Psoas muscle (tissue), 8 donors: ENCODE measurements at regions of chr14 and their contacts with region 1.

Region 1: GRCh38 chr14:49633640-49634546 is 1.2 kb downstream of the DNAAF2 start:
- DNase-seq: peak; percentile 95 to 97
- ATAC-seq: peak; percentile 93 to 95 (median 94)
- H3K4me3 ChIP-seq: peak overlapping the region; percentile 97
- H3K27ac ChIP-seq: peak overlapping the region; percentile 100
- H3K4me1 ChIP-seq: peaks cover 20% of the 10 kb centered on the region
- H3K27me3 ChIP-seq: no peaks in the 10 kb centered on the region
- CTCF ChIP-seq: peak; percentile 68

Region 2: GRCh38 chr14:49692811-49693734 is 59.2 kb after region 1 on chr14 and contains the start of gene KLHDC1:
- intact Hi-C with region 1: loop called (anchors 2 to 10 kb)
- DNase-seq: peak; percentile 89 to 94
- ATAC-seq: peak; percentile 85 to 94 (median 91)
- H3K4me3 ChIP-seq: peak within 1 kb of the TSS; percentile 75
- H3K27ac ChIP-seq: peak within 1 kb of the TSS; percentile 93
- H3K4me1 ChIP-seq: peaks cover 5% of the 10 kb centered on the region
- H3K27me3 ChIP-seq: no peaks in the 10 kb centered on the region
- CTCF ChIP-seq: no peak
- total RNA-seq, gene KLHDC1: 5.3 to 7.6 (median 6.9) TPM

Region 3: DNA sequence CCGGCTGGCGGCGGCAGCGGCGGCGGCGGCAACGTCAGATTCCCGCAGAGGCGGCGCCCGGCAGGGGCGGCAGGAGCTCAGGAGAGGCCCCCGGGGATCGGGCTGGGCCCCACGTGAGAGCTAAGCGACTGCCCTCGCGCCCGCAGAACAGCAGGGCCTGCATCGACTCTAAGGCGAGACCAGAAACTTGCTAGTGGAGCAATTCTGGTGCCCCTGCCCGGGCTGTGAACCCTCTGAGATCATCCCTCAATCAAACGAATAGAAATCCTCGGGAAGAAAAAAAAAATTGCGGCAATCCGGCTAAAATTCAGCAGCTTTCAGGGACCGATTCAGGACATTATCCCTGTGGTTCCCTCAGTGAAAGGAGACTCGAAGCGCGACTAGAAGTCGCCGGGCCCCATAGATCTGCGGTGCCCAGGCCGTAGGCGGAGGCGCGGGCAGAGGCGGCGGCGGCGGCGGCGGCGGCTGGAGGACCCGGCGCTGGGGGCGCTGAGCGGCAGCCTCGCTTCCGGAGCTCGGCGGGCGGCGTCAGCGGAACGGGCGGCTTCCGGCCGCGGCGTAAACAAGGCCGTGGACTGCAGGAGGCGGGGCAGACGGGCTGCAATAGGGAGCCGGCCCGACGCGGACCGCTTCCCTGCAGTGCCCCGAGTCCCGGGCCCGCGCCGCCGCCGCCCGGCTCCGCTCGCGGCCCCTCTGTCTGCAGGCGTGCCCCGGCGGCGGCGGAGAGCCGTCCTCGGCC is 133.8 kb after region 1 on chr14 and contains the start of gene KLHDC2:
- intact Hi-C with region 1: loop called (anchors 2 to 5 kb)
- DNase-seq: peak; percentile 90 to 95
- ATAC-seq: peak; percentile 90 to 94 (median 94)
- H3K4me3 ChIP-seq: peak within 1 kb of the TSS; percentile 95
- H3K27ac ChIP-seq: peak within 1 kb of the TSS; percentile 94
- H3K4me1 ChIP-seq: peaks cover 24% of the 10 kb centered on the region
- H3K27me3 ChIP-seq: no peaks in the 10 kb centered on the region
- CTCF ChIP-seq: peak; percentile 42
- total RNA-seq, gene KLHDC2: 52.3 to 90.2 (median 69.5) TPM

Region 4: GRCh38 chr14:49828640-49829039 is 194.7 kb after region 1 on chr14:
- intact Hi-C with region 1: loop called in 1 of 2 experiments (anchors 1 kb)
- DNase-seq: no peak
- ATAC-seq: no peak
- H3K4me3 ChIP-seq: no peak overlapping the region
- H3K27ac ChIP-seq: no peak overlapping the region
- H3K4me1 ChIP-seq: no peaks in the 10 kb centered on the region
- H3K27me3 ChIP-seq: no peaks in the 10 kb centered on the region
- CTCF ChIP-seq: no peak

Region 5: DNA sequence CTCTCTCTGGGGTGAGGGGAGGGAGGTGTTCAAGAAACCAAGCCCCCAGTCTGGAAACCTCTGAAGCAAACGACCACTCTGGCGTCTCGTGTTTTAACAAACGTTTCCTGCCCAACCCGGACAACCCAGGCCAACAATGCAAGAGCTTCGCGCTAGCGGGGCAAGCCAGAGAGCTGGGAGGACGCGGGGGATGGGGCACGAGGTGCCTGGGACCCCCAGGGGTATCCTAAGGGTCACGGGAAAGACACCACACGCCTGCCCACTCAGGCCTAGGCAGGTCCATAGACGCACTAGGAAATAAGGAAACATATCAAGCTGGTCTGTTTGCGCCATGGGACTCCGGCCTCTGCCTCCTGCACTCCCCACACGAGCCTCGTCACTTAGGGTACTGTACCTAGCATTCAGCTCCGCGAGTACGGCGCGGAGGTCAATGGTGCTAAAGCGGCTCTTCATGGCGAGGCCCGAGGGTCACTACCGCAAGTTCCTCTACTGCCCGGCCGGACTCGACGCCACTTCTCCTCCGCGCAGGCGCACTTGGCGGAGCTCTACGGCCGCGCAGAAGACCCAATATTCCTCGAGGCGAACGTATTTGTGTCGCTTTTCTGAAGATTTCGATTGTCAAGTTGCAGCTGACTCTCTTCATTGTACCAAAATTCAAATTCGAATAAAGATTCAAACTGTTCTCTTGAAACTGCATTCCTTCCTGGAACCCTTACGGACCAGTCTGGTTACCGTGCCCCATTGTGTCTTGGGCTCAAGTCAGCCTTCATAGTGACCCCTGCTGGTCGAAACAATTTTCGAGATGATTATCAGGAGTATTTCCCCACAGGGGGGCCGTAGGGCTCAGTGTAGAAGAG is 218.6 kb after region 1 on chr14 and contains the start of gene NEMF:
- intact Hi-C with region 1: loop called (anchors 2 to 10 kb)
- DNase-seq: peak; percentile 87 to 94
- ATAC-seq: peak; percentile 86 to 90 (median 88)
- H3K4me3 ChIP-seq: peak within 1 kb of the TSS; percentile 84
- H3K27ac ChIP-seq: peak within 1 kb of the TSS; percentile 95
- H3K4me1 ChIP-seq: peaks cover 23% of the 10 kb centered on the region
- H3K27me3 ChIP-seq: no peaks in the 10 kb centered on the region
- CTCF ChIP-seq: peak; percentile 80
- total RNA-seq, gene NEMF: 52.8 to 68.3 (median 57.0) TPM